PC-3 (cell line): ENCODE measurements at regions of chr2 and their contacts with region 1.

Region 1: GRCh38 chr2:30146438-30147147 is at the start of gene YPEL5:
- DNase-seq: peak; percentile 96
- ATAC-seq: peak; percentile 94
- H3K4me3 ChIP-seq: peak within 1 kb of the TSS; percentile 93
- H3K27ac ChIP-seq: no peak within 1 kb of the TSS
- H3K4me1 ChIP-seq: peaks cover 37% of the 10 kb centered on the region
- H3K27me3 ChIP-seq: no peaks in the 10 kb centered on the region
- CTCF ChIP-seq: no peak
- total RNA-seq, gene YPEL5: 29.9 TPM in 2 replicates

Region 2: GRCh38 chr2:30686000-30686399 is 539.4 kb after region 1 on chr2:
- CTCF ChIA-PET with region 1: no interaction called
- POLR2A ChIA-PET with region 1: interaction called, 34 read pairs
- intact Hi-C with region 1: no loop called
- DNase-seq: peak; percentile 13
- ATAC-seq: peak; percentile 45; the same call in 1 of the 2 replicates
- H3K4me3 ChIP-seq: no peak overlapping the region
- H3K27ac ChIP-seq: no peak overlapping the region
- H3K4me1 ChIP-seq: no peaks in the 10 kb centered on the region
- H3K27me3 ChIP-seq: no peaks in the 10 kb centered on the region
- CTCF ChIP-seq: peak; percentile 54